ENCODE measurements at regions of chr11 and their contacts with region 1.

Region 1: GRCh38 chr11:71086675-71087258 is 165.6 kb downstream of the SHANK2 start:
- DNase-seq: peak; percentile 79
- H3K4me3 ChIP-seq: no peak overlapping the region
- H3K4me3 Mint-ChIP-seq: no peak overlapping the region
- H3K27ac Mint-ChIP-seq: no peak overlapping the region
- H3K4me1 ChIP-seq: no peaks in the 10 kb centered on the region
- H3K4me1 Mint-ChIP-seq: no peaks in the 10 kb centered on the region
- H3K27me3 ChIP-seq: no peaks in the 10 kb centered on the region
- H3K27me3 Mint-ChIP-seq: no peaks in the 10 kb centered on the region
- CTCF ChIP-seq: peak; percentile 85 to 96

Region 2: DNA sequence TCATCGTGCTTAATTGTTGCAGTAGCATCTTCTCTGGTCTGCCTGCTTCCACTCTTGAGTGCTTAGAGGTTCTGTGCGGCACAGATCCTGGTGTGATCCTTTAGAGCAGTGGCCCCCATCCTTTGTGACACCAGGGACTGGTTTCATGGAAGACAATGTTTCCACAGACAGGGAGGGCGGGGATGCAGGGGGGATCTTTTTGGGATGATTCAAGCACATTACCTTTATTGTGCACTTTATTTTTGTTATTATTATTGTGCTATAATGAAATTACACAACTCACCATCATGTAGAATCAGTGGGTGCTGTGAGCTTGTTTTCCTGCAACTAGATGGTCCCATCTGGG is 242.4 kb after region 1 on chr11:
- CTCF ChIA-PET with region 1: interaction called, 12 read pairs
- POLR2A ChIA-PET with region 1: no interaction called
- intact Hi-C with region 1: no loop called
- DNase-seq: no peak
- H3K4me3 ChIP-seq: no peak overlapping the region
- H3K4me3 Mint-ChIP-seq: no peak overlapping the region
- H3K27ac Mint-ChIP-seq: no peak overlapping the region
- H3K4me1 ChIP-seq: no peaks in the 10 kb centered on the region
- H3K4me1 Mint-ChIP-seq: no peaks in the 10 kb centered on the region
- H3K27me3 ChIP-seq: no peaks in the 10 kb centered on the region
- H3K27me3 Mint-ChIP-seq: no peaks in the 10 kb centered on the region
- CTCF ChIP-seq: no peak

Region 3: DNA sequence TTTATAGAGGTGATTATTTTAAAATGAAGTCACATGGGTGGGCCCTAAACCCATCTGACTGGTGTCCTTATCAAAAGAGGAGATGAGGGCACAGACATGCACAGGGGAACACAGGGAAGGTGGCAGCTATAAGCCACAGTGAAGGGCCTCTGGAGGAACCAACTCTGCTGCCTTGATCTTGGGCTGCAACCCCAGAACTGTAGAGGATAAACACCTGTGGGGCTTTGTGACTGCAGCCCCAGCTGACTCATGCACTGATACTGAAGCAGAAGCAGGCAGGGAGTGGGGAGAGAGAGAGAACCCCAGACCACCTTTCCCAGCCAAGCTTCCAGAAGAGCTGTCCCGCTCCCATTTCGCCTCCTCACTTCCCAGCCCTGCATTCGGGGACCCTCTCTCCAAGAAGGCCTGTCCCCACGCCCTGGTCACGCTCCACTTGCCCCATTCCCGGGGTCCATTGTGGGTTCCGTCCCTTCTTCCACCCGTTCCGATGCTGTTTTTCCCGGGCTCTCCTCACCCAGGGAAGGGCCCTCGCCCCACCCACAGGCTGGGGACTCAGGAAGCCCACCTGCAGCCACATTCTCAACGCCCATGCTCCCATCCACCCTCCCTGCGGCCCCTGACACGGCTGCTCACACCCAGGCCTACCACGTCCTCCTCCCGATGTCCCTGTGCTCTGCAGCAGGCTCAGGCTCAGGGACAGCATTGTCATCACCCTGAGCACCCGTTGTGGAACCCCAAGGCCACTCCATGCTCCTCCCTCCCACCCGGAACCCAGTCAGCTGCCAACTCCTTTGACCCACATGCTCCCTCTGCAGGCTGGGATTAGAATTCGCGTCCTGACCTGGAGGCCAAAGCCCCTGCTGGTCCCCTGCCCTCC is 256.4 kb after region 1 on chr11:
- CTCF ChIA-PET with region 1: no interaction called
- POLR2A ChIA-PET with region 1: no interaction called
- intact Hi-C with region 1: loop called (anchors 2 kb)
- DNase-seq: peak; percentile 84 to 85
- H3K4me3 ChIP-seq: no peak overlapping the region
- H3K4me3 Mint-ChIP-seq: no peak overlapping the region
- H3K27ac Mint-ChIP-seq: no peak overlapping the region
- H3K4me1 ChIP-seq: peaks cover 8% of the 10 kb centered on the region; the same call in 1 of the 2 replicates
- H3K4me1 Mint-ChIP-seq: peaks cover 6% of the 10 kb centered on the region
- H3K27me3 ChIP-seq: no peaks in the 10 kb centered on the region
- H3K27me3 Mint-ChIP-seq: peaks cover 9% of the 10 kb centered on the region
- CTCF ChIP-seq: peak; percentile 87 to 94

Region 4: GRCh38 chr11:71372693-71373657 is 286.2 kb after region 1 on chr11:
- CTCF ChIA-PET with region 1: interaction called, 14 read pairs
- POLR2A ChIA-PET with region 1: no interaction called
- intact Hi-C with region 1: loop called (anchors 1 kb)
- DNase-seq: peak in 1 of 2 experiments; percentile 60
- H3K4me3 ChIP-seq: no peak overlapping the region
- H3K4me3 Mint-ChIP-seq: no peak overlapping the region
- H3K27ac Mint-ChIP-seq: no peak overlapping the region
- H3K4me1 ChIP-seq: no peaks in the 10 kb centered on the region
- H3K4me1 Mint-ChIP-seq: no peaks in the 10 kb centered on the region
- H3K27me3 ChIP-seq: no peaks in the 10 kb centered on the region
- H3K27me3 Mint-ChIP-seq: peaks cover 11% of the 10 kb centered on the region
- CTCF ChIP-seq: peak; percentile 74 to 90

Region 5: GRCh38 chr11:71420455-71421241 is 333.9 kb after region 1 on chr11:
- CTCF ChIA-PET with region 1: interaction called, 9 read pairs
- POLR2A ChIA-PET with region 1: no interaction called
- intact Hi-C with region 1: loop called (anchors 1 kb)
- DNase-seq: peak; percentile 69 to 71
- H3K4me3 ChIP-seq: no peak overlapping the region
- H3K4me3 Mint-ChIP-seq: no peak overlapping the region
- H3K27ac Mint-ChIP-seq: no peak overlapping the region
- H3K4me1 ChIP-seq: no peaks in the 10 kb centered on the region
- H3K4me1 Mint-ChIP-seq: no peaks in the 10 kb centered on the region
- H3K27me3 ChIP-seq: no peaks in the 10 kb centered on the region
- H3K27me3 Mint-ChIP-seq: peaks cover 3% of the 10 kb centered on the region
- CTCF ChIP-seq: peak; percentile 90 to 91